BJ (cell line): ENCODE measurements at regions of chr7 and their contacts with region 1.

Region 1: DNA sequence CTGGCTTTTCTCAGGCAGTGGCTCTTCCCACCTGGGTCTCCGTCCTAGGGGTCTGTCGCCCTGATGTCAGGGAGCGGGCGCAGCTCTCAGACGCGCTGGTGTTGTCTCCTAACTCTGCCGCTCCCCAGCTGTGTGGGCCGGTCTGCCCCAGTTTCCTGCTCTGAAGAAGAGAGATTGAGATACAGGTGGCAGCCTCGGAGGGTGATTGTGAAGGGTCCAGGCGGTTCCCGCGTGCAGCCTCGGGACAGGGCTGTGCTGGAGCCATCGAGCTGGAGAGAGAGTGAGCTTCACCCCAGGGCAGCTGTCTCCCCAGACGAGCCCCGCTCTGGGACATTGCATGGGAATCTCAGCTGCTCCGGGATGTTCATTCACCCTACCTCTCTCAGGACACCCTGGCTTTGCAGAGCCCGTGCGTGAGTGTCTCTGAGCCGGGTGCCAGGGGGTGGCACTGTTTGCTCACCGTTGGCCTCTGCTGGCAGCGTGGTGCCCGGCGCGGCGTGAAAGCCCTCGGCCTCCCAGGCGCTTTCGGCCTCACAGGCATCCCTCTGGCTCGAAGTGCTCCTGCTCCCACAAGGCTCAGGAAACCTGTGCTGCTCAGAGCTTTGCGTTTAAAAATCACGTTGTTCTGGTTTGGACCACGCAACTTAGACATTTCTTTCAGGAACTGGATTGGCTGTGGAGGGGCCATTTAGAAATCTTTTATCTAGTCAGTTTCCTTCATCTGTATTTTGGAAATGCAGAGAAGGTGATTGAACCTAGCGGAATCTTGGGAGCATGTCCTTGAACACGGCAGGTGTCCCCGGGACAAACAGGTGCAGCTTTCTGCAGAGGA is 33.8 kb upstream of the ZFAND2A start:
- DNase-seq: no peak
- H3K4me3 ChIP-seq: no peak overlapping the region
- H3K27me3 ChIP-seq: peaks cover 1% of the 10 kb centered on the region
- CTCF ChIP-seq: peak; percentile 63

Region 2: DNA sequence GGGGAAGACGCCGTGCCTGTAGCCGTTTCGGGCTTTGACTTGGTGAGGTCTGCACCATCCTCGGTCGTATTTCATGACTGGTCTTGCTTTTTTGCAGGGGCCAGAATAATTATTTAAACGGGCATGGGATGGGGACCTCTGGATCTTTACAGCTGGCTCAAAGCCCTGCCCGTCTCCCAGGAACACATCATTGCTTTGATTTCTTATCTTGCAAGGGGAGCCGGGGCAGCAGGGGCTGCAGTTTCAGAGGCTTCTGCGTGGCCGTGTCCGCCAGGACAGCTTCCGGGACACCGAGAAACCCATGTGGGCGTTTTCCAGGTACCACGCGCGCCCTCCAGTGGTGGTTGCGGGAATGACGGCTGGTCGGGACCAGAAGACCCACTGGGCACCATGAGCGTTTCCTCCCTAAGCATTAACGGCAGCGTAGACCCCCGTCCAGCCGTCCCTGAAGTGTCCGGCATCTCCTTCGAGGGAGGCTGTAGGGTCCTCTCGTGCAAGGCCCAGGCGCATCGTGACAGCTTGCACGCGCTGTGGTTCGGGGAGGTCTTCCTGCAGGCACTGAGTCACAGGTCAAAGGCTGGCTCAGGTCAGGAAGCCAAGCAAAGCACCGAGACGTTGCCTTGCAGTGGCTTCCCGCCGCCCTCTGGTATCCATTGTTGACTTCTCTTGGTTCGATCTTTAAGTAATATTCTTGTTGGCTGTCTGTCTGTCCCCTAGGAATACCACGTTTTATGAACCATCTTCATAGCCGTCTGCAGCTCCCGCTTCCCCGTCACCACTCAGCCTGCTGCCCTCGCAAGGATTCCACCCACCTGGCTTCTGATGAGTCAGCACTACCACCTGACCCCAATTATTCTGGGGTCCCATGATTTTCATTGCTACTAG is 17.6 kb before region 1 on chr7:
- CTCF ChIA-PET with region 1: interaction called, 32 read pairs
- POLR2A ChIA-PET with region 1: no interaction called
- DNase-seq: no peak
- H3K4me3 ChIP-seq: peak overlapping the region; percentile 25
- H3K27me3 ChIP-seq: 0 out of 2 replicates have a peak, but pooled peaks cover 1% of the 10 kb centered on the region
- CTCF ChIP-seq: peak; percentile 95

Region 3: DNA sequence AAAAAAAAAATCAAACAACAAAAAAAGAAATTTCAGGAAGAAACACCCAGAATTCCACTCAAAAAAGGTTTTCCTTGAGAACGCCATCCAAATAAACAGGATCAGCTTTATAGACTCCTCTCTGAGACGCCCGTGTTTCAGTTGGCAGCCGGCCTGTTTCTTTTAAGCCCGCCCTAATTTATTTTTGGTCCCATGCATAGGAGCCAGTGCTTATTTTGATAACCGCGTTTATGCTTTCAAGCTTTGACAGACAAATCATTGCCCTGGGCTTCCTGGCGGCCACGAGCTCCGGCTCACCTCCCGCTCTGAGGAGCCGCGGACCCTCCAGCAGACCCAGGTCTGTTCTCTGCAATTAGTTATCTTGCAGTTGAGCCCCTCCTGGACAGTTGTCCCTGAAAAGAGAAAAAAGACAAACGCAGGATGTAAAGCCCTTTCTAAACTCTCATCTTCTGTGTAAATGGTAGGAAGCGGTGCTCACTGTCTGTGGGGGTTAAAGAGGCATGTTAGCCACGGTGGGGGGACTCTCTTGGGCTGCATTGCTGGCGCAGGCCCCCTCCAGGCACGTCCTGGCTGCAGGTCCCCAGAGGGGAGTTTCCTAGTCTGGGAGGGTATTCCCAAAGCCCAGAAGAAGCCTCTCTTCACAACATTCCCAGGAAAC is 16.6 kb after region 1 on chr7:
- CTCF ChIA-PET with region 1: interaction called, 11 read pairs
- POLR2A ChIA-PET with region 1: no interaction called
- DNase-seq: no peak
- H3K4me3 ChIP-seq: no peak overlapping the region
- H3K27me3 ChIP-seq: peaks cover 35% of the 10 kb centered on the region
- CTCF ChIP-seq: no peak

Region 4: DNA sequence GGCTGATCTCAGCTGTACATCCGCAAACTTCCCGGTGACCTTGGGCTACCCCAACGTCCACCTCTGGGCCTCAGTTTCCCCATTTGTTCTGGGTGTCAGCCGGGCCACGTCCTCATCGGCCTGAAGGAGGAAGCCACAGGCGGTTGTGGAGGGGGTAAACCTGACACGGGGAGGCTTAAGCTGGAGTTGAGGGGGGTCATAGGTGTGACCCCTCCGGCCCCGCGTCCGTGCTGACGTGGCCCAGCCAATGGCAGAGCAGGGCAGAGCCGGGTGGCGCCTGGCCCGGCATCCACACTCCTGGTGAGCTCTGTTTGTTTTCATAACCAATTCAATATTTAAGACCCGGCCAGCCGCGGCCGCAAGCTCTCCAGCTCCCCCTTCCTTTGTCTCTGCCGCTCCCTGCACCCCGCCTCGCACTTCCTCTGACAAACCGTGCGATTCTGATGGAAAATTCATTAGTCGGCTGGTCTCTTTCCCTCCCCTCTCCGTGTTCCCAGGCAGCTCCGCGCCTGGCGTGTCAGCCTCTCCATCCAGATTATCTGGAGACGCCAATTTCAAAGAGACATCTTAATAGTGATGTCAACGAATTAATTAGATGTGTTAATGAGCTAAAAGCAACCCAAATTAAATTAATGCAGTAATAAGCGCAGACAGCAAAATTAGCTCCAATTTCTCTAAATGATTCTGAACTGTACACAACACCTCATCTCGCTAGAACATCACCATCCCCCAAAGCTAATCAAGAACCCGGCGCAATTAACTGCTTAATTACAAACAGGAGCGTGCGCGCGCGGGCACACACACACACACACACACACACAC is 210.0 kb after region 1 on chr7:
- CTCF ChIA-PET with region 1: interaction called, 19 read pairs
- POLR2A ChIA-PET with region 1: no interaction called
- DNase-seq: no peak
- H3K4me3 ChIP-seq: no peak overlapping the region
- H3K27me3 ChIP-seq: peaks cover 42% of the 10 kb centered on the region
- CTCF ChIP-seq: peak; percentile 31; the same call in 1 of the 2 replicates

Region 5: GRCh38 chr7:1473864-1474512 is 280.2 kb after region 1 on chr7:
- CTCF ChIA-PET with region 1: interaction called, 29 read pairs
- POLR2A ChIA-PET with region 1: no interaction called
- DNase-seq: no peak
- H3K4me3 ChIP-seq: no peak overlapping the region
- H3K27me3 ChIP-seq: no peaks in the 10 kb centered on the region
- CTCF ChIP-seq: peak; percentile 93